GM12878 (cell line): ENCODE measurements at regions of chr1 and their contacts with region 1.

Region 1: DNA sequence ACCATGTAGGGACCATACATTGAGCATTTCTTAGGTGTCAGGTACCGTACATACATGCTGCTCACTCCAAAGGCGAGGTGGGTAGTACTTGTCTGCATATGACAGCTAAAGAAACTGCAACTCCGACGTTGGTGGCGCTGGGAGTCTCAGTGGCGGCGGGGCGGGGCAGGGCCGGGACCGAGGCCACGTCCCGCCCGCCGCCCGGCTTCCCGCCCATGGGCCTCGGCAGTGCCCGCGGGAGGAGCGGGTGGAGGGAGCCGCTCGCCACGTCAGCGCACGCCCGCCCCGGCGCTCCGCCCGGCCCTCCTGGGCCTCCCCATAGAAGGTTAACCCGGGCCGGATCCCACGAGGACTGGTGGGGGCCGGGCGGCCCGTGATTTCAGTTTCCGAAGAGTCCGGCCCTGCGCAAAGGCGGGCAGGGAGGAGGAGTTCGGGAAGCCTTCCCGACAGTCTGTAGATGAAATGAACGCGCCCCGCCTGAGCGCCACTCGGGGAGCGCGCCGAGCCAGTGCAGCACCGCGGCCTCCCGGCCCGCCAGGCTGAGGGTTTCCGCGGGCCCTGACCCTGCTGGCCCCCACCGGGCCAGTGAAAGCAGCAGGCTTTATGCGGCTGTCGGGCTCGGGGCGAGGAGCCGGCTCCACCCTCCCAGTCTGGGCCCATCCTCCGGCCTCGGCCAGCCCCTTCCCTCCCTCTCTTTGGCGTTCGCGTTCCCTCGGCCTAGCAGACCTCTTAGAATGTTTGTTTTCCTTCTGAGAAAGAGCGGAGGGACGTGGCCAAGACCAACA is 119.9 kb upstream of the JUN start:
- DNase-seq: peak; percentile 59
- ATAC-seq: peak; percentile 96
- H3K4me3 ChIP-seq: peak overlapping the region; percentile 58; the same call in 1 of the 2 replicates
- H3K27ac ChIP-seq: peak overlapping the region; percentile 60
- H3K4me1 ChIP-seq: peaks cover 9% of the 10 kb centered on the region; the same call in 1 of the 2 replicates
- H3K27me3 ChIP-seq: no peaks in the 10 kb centered on the region
- CTCF ChIP-seq: no peak
- EP300 ChIP-seq: no peak
- POLR2A ChIP-seq: peak; percentile 81
- RAD21 ChIP-seq: no peak

Region 2: GRCh38 chr1:58816072-58816746 is 87.5 kb before region 1 on chr1:
- CTCF ChIA-PET with region 1: interaction called, 3 read pairs
- POLR2A ChIA-PET with region 1: no interaction called
- RAD21 ChIA-PET with region 1: interaction called, 4 read pairs
- SMC1A ChIA-PET with region 1: interaction called, 5 read pairs
- in situ Hi-C with region 1: no loop called
- intact Hi-C with region 1: loop called (anchors 1 kb)
- DNase-seq: peak; percentile 53
- ATAC-seq: peak; percentile 95
- H3K4me3 ChIP-seq: peak overlapping the region; percentile 88
- H3K27ac ChIP-seq: peak overlapping the region; percentile 73
- H3K4me1 ChIP-seq: peaks cover 13% of the 10 kb centered on the region
- H3K27me3 ChIP-seq: no peaks in the 10 kb centered on the region
- CTCF ChIP-seq: peak; percentile 22 to 44 (median 24); a peak in 3 of 6 replicates
- EP300 ChIP-seq: no peak
- POLR2A ChIP-seq: peak; percentile 86
- RAD21 ChIP-seq: peak; percentile 45

Region 3: DNA sequence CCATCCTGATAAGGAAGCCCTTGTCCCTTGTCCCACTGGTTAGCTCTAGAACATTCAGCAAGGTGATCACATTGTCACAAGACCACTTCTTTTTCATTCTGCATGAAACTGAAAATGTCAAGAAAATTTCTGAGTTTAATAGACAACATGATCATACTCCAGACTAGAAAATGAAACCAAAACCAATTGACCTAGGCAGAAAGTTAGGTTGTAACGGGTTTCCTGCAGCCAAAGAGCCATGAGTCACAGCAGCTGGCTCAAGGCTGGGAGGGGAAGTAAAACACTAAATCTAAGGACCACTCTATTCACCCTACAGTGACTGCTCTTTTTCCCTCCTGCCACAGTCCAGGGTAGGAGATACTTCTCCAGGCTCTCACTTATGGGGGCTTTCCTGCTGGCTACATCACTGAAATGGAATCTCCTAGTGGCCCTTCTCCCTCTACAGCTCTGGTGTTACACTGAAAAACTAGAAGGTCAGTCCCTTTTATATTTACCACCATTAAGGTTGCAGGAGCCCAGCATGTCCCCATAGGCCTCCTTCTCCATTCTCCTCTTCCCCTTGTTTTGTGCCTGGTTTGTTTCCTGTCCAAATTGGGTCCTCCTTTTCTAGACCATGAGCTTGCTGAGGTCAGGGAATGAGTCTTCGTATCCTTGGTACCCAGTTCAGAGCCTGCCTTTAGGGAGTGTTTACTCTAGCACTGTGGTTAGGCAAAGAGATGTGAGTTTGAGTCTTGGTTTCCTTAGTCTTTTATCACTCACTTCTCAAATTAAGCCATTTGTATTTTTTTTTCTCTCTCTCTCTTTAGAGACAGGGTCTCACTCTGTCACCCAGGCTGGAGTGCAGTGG is 116.7 kb after region 1 on chr1:
- CTCF ChIA-PET with region 1: no interaction called
- POLR2A ChIA-PET with region 1: no interaction called
- RAD21 ChIA-PET with region 1: no interaction called
- SMC1A ChIA-PET with region 1: interaction called, 15 read pairs
- in situ Hi-C with region 1: no loop called
- intact Hi-C with region 1: loop called (anchors 5 kb)
- DNase-seq: peak; percentile 87
- ATAC-seq: peak; percentile 93
- H3K4me3 ChIP-seq: peak overlapping the region; percentile 53; the same call in 1 of the 2 replicates
- H3K27ac ChIP-seq: peak overlapping the region; percentile 75
- H3K4me1 ChIP-seq: peaks cover 20% of the 10 kb centered on the region
- H3K27me3 ChIP-seq: no peaks in the 10 kb centered on the region
- CTCF ChIP-seq: no peak
- EP300 ChIP-seq: no peak
- POLR2A ChIP-seq: no peak
- RAD21 ChIP-seq: peak; percentile 12; the same call in 1 of the 2 replicates